ENCODE measurements at regions of chr11 and their contacts with region 1.

Region 1: DNA sequence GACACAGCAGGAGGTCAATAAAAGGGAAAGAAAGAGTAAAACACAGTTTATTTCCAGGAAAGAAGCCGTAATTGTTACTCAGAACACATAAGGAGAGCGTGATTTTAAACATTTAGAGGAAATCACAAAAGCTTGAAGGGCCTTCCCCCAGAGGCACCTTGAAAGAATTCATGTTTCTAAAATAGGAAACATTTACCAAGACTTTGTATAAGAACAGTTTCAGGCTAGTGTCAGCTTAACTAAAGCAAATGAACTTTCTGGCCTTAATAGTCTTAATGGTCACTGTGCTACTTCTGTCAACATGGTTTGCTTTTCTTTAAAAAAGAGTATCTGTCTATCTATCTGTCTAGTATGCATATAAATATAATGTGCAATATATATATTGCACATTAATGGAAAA is 208.8 kb downstream of the CNTN5 start:
- DNase-seq: no peak
- H3K4me3 ChIP-seq: no peak overlapping the region
- H3K27ac ChIP-seq: no peak overlapping the region
- H3K4me1 ChIP-seq: no peaks in the 10 kb centered on the region
- H3K27me3 ChIP-seq: no peaks in the 10 kb centered on the region
- CTCF ChIP-seq: no peak
- POLR2A ChIP-seq: no peak

Region 2: DNA sequence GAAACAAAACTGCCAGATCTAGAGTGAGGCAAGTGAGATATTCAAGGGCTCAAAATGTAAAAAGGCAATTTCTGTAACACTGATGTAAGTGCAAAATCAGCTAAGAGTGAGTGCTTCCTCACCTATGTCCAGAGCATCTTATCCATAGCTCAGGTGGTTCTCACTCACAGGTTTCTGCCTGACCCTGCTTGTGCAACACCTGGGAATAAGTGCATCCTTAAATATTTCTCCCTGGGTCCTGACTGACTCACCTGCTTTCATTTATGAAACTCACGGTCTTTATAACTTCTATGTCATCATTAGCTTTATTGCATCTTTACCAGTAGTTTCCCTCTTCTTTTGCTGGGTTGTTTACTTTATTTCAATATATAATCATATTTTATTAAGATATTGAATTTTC is 51.8 kb after region 1 on chr11:
- intact Hi-C with region 1: no loop called
- DNase-seq: no peak
- H3K4me3 ChIP-seq: no peak overlapping the region
- H3K27ac ChIP-seq: no peak overlapping the region
- H3K4me1 ChIP-seq: no peaks in the 10 kb centered on the region
- H3K27me3 ChIP-seq: no peaks in the 10 kb centered on the region
- CTCF ChIP-seq: no peak
- POLR2A ChIP-seq: no peak

Region 3: DNA sequence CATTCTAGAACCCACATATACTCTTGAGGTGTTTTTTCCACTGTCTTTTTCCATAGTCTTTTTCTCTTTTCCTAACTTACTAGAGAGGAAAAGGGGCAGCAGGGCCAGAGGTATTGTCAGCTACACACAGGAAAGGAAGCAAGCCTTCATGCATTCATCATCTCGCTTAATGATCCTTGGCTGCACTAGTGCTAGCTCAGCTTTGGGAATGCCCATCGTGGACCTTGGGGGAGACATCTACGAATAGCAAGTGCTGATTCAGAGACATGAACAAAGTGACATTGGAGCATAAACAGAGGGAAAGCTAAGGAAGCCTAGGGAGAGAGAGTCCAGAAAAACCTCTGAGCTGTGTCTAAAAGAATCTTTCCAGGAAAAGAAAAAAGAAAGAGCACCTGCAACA is 991.3 kb after region 1 on chr11:
- intact Hi-C with region 1: loop called (anchors 10 kb)
- DNase-seq: no peak
- H3K4me3 ChIP-seq: no peak overlapping the region
- H3K27ac ChIP-seq: no peak overlapping the region
- H3K4me1 ChIP-seq: no peaks in the 10 kb centered on the region
- H3K27me3 ChIP-seq: no peaks in the 10 kb centered on the region
- CTCF ChIP-seq: no peak
- POLR2A ChIP-seq: no peak

Measured in vagina (tissue), 2 donors.